ENCODE measurements at regions of chr3 and their contacts with region 1.

Region 1: GRCh38 chr3:45938864-45939263 is 4.4 kb upstream of the CXCR6 start:
- DNase-seq: peak; percentile 73
- H3K4me3 ChIP-seq: no peak overlapping the region; a peak in 1 of 4 replicates
- H3K27ac ChIP-seq: no peak overlapping the region
- H3K4me1 ChIP-seq: peaks cover 0 to 18% of the 10 kb centered on the region in 2 experiments; a peak in 1 of 4 replicates
- H3K27me3 ChIP-seq: no peaks in the 10 kb centered on the region
- CTCF ChIP-seq: peak; percentile 92
- EP300 ChIP-seq: no peak
- RAD21 ChIP-seq: peak; percentile 89

Region 2: GRCh38 chr3:45923755-45924154 is 15.1 kb before region 1 on chr3:
- CTCF ChIA-PET with region 1: interaction called, 31 read pairs
- POLR2A ChIA-PET with region 1: no interaction called
- DNase-seq: no peak
- H3K4me3 ChIP-seq: no peak overlapping the region
- H3K27ac ChIP-seq: no peak overlapping the region
- H3K4me1 ChIP-seq: no peaks in the 10 kb centered on the region
- H3K27me3 ChIP-seq: no peaks in the 10 kb centered on the region
- CTCF ChIP-seq: no peak
- EP300 ChIP-seq: no peak
- RAD21 ChIP-seq: no peak

Region 3: GRCh38 chr3:45950686-45951600 is 12.1 kb after region 1 on chr3:
- CTCF ChIA-PET with region 1: interaction called, 27 read pairs
- POLR2A ChIA-PET with region 1: interaction called, 3 read pairs
- DNase-seq: no peak
- H3K4me3 ChIP-seq: no peak overlapping the region
- H3K27ac ChIP-seq: no peak overlapping the region
- H3K4me1 ChIP-seq: no peaks in the 10 kb centered on the region
- H3K27me3 ChIP-seq: no peaks in the 10 kb centered on the region
- CTCF ChIP-seq: no peak
- EP300 ChIP-seq: no peak
- RAD21 ChIP-seq: no peak

Region 4: GRCh38 chr3:45958321-45958791 is 19.5 kb after region 1 on chr3:
- CTCF ChIA-PET with region 1: interaction called, 15 read pairs
- POLR2A ChIA-PET with region 1: interaction called, 3 read pairs
- DNase-seq: no peak
- H3K4me3 ChIP-seq: no peak overlapping the region
- H3K27ac ChIP-seq: no peak overlapping the region
- H3K4me1 ChIP-seq: no peaks in the 10 kb centered on the region
- H3K27me3 ChIP-seq: no peaks in the 10 kb centered on the region
- CTCF ChIP-seq: no peak
- EP300 ChIP-seq: no peak
- RAD21 ChIP-seq: no peak

Region 5: DNA sequence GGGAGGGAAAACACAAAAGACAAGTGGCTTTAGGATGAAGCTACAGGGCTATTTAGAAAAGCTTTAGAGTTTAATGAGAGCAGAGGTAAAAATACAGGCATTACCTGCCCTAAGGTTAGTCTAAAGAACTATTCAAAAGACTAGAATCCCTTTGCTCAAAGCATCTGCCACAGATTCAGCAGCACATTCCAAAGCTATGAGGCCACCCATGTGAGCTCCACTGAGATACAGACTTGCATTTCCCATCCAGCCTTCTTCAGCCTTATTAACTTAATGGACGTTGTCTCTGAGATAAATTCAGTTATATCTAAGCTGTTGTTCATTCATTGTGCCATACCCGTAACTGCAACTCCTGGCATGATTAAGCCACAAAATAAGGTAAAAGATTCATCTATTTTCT is 29.8 kb after region 1 on chr3:
- CTCF ChIA-PET with region 1: interaction called, 23 read pairs
- POLR2A ChIA-PET with region 1: interaction called, 3 read pairs
- DNase-seq: no peak
- H3K4me3 ChIP-seq: no peak overlapping the region
- H3K27ac ChIP-seq: no peak overlapping the region
- H3K4me1 ChIP-seq: peaks cover 0 to 4% of the 10 kb centered on the region in 2 experiments; a peak in 3 of 4 replicates
- H3K27me3 ChIP-seq: no peaks in the 10 kb centered on the region
- CTCF ChIP-seq: no peak
- EP300 ChIP-seq: no peak
- RAD21 ChIP-seq: no peak

Region 6: GRCh38 chr3:46395210-46395731 is 456.4 kb after region 1 on chr3:
- CTCF ChIA-PET with region 1: no interaction called
- POLR2A ChIA-PET with region 1: no interaction called
- DNase-seq: no peak
- H3K4me3 ChIP-seq: no peak overlapping the region
- H3K27ac ChIP-seq: no peak overlapping the region
- H3K4me1 ChIP-seq: no peaks in the 10 kb centered on the region
- H3K27me3 ChIP-seq: peaks cover 35% of the 10 kb centered on the region; the same call in 1 of the 2 replicates
- CTCF ChIP-seq: no peak
- EP300 ChIP-seq: no peak
- RAD21 ChIP-seq: no peak

Measured in SK-N-SH (cell line).